Activated CD8-positive, alpha-beta memory T cell treated with anti-CD3 and anti-CD28 coated beads, Interleukin-2, amount 10 ng/mL, durations not matched to agents 7 days and 5 days (primary cell): ENCODE measurements at regions of chr7 and their contacts with region 1.

Region 1: DNA sequence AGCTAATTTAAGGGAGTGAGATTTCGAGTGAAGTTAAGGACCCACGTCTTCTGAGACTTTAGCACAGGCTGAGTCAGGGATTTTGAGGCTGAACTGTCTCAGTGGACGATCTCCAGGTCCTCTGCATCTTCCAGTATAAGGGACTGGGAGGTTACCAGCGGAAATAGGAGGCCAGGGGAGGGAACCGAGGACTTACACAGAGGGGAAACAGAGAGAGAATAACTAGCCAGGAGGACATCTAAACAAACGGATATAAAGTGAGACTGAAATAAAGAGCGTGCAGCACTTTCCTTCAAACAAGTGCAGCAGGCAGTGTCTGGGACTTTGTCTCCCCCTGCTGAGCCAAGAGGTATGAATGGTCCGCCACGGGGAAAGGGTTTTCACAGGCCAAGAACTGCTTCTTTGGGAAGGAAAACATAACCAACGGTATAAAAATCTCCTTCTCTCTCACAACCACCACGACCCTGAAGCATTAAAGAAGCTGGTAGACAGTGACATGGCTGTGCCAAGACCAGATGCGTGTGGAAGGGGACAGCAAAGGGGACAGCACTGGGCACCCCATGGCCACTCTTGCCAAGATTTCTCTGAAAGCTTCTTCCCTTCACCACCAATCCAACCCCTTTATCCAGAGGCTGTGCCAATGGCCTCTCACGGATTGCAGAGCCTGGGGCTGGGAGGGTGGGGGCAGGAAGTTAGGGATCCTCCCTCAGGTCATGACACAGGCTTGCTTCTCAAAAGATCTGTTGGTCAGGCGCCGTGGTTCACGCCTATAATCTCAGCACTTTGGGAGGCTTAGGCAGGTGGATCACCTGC is 72.0 kb downstream of the SLC37A3 start:
- DNase-seq: peak; percentile 70
- ATAC-seq: peak; percentile 91
- H3K4me3 Mint-ChIP-seq: no peak overlapping the region
- H3K27ac Mint-ChIP-seq: no peak overlapping the region
- H3K4me1 Mint-ChIP-seq: no peaks in the 10 kb centered on the region
- H3K27me3 Mint-ChIP-seq: no peaks in the 10 kb centered on the region

Region 2: GRCh38 chr7:140269004-140269638 is 57.2 kb before region 1 on chr7:
- CTCF ChIA-PET with region 1: no interaction called
- DNase-seq: no peak
- ATAC-seq: peak; percentile 61
- H3K4me3 Mint-ChIP-seq: no peak overlapping the region
- H3K27ac Mint-ChIP-seq: peak overlapping the region; percentile 73
- H3K4me1 Mint-ChIP-seq: peaks cover 25% of the 10 kb centered on the region
- H3K27me3 Mint-ChIP-seq: no peaks in the 10 kb centered on the region

Region 3: DNA sequence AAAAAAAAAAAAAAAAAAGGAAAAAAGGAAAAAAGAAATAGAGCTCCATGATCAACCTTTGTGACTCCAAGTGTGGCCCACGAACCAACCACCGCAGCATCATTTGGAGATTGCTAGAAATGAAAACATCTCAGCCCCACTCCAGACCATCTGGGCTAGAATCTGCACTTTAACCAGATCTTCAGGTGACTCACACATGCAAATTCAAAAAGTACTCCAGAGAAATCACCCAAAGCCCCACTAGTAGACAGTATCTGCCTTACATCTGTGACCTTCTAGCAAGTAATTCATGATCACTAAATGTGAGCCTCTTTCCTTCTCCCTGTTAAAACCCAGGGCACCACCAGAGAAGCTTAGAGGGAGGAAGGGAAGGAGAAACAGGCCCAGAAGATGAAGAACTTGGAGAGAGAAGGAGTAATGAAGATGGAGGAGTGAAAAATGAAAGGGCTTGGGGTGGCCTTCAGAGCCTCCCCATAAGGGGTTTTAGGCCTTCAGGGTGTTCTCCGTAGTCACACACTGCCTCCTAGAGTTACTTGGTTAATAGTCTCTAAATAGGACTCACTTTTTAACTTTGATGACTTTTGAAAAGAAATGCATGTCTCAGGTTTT is 22.0 kb before region 1 on chr7:
- CTCF ChIA-PET with region 1: interaction called, 10 read pairs
- DNase-seq: peak; percentile 70
- ATAC-seq: peak; percentile 95
- H3K4me3 Mint-ChIP-seq: no peak overlapping the region
- H3K27ac Mint-ChIP-seq: peak overlapping the region; percentile 58
- H3K4me1 Mint-ChIP-seq: peaks cover 9% of the 10 kb centered on the region
- H3K27me3 Mint-ChIP-seq: peaks cover 1% of the 10 kb centered on the region

Region 4: DNA sequence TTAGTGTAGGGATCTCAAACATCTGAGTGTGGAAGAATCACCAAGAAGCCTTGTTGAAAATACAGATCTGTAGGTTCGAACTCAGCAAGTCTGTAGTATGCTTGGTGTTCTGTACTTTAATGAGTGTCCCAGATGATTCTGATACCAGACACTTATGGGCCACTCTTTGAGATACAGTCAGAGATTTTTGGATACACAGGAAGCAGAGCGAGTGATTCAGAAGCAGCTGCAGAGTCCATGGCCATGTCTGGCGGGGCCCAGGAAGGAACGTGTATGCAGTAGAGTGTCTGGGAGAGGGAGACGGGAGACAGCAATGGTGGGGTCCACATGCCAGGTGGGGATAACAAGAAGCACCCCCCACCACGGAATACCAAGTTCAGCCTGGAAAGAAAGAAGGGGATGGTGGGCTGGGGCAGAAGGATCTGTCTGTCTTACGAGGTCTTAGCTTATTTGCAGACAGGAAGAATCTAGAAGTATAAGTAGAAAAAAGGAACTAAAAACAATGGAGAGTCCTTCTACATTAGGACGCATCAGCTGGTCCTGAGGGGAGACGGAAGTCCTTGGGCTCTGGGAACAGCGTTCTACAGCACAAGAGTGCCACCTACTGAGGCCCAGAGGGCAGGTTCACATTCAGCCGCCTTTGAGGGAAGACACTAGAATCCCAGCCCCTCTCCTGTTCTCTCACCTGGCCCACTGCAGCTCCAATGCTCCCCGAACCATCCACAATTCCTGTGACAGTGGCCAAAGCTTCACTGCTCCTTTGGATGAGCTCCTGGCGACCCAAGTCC is 16.6 kb after region 1 on chr7:
- CTCF ChIA-PET with region 1: no interaction called
- DNase-seq: no peak
- ATAC-seq: no peak
- H3K4me3 Mint-ChIP-seq: no peak overlapping the region
- H3K27ac Mint-ChIP-seq: no peak overlapping the region
- H3K4me1 Mint-ChIP-seq: no peaks in the 10 kb centered on the region
- H3K27me3 Mint-ChIP-seq: no peaks in the 10 kb centered on the region

Region 5: GRCh38 chr7:140640727-140641523 is 314.6 kb after region 1 on chr7 and contains the start of gene DENND2A:
- CTCF ChIA-PET with region 1: no interaction called
- DNase-seq: no peak
- ATAC-seq: peak; percentile 31
- H3K4me3 Mint-ChIP-seq: peak within 1 kb of the TSS; percentile 61
- H3K27ac Mint-ChIP-seq: no peak within 1 kb of the TSS
- H3K4me1 Mint-ChIP-seq: peaks cover 11% of the 10 kb centered on the region
- H3K27me3 Mint-ChIP-seq: peaks cover 67% of the 10 kb centered on the region
- total RNA-seq, gene DENND2A: 0.32 TPM in 1 of 2 experiments, not detected in the other